Activated naive CD4-positive, alpha-beta T cell treated with anti-CD3 and anti-CD28 coated beads for 36 hours (primary cell): ENCODE measurements at regions of chr9 and their contacts with region 1.

Region 1: DNA sequence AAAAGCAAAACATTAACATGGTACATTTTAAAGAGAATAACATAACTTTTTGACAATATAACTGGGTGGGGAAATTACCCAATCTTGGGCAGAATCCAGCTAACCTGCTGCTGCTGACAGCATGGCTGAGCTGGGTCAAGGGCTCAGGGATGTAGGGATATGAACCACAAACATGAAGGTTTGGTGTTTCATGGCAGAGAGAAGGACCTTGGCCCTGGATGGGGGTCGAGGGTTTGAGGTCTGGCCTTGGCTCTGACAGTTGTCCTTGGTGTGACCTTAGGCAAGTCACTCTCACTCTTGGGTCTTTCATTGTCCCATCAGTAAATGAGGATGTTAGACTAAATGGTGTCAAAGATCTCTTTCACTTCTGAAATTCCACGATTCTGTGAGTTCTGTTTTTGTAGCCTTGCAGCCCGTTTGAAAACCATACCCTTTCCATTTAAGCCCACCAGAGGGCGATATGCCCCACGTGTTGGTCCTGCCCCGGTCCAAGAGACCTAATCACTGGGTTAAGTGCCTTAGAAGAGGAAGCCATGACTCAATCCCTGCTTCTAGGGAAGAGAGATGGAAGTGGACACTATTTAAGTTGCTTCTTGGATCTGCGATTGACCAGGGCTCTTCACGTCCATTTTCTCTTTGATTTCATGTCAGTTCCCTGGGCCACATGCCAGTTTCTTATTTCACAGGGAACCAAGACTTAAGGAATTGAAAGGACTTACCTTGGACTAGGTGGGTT is 56.8 kb upstream of the TEX48 start:
- DNase-seq: peak; percentile 82
- H3K4me3 Mint-ChIP-seq: no peak overlapping the region
- H3K27ac Mint-ChIP-seq: peak overlapping the region; percentile 86
- H3K4me1 Mint-ChIP-seq: peaks cover 56% of the 10 kb centered on the region
- H3K27me3 Mint-ChIP-seq: no peaks in the 10 kb centered on the region

Region 2: GRCh38 chr9:114718801-114719221 is 19.9 kb before region 1 on chr9:
- CTCF ChIA-PET with region 1: interaction called, 5 read pairs
- intact Hi-C with region 1: loop called (anchors 1 kb)
- DNase-seq: peak; percentile 97
- H3K4me3 Mint-ChIP-seq: peak overlapping the region; percentile 22
- H3K27ac Mint-ChIP-seq: peak overlapping the region; percentile 81
- H3K4me1 Mint-ChIP-seq: peaks cover 49% of the 10 kb centered on the region
- H3K27me3 Mint-ChIP-seq: peaks cover 5% of the 10 kb centered on the region

Region 3: GRCh38 chr9:114754581-114754980 is 15.8 kb after region 1 on chr9:
- CTCF ChIA-PET with region 1: no interaction called
- intact Hi-C with region 1: no loop called
- DNase-seq: no peak
- H3K4me3 Mint-ChIP-seq: no peak overlapping the region
- H3K27ac Mint-ChIP-seq: no peak overlapping the region
- H3K4me1 Mint-ChIP-seq: peaks cover 6% of the 10 kb centered on the region
- H3K27me3 Mint-ChIP-seq: no peaks in the 10 kb centered on the region

Region 4: DNA sequence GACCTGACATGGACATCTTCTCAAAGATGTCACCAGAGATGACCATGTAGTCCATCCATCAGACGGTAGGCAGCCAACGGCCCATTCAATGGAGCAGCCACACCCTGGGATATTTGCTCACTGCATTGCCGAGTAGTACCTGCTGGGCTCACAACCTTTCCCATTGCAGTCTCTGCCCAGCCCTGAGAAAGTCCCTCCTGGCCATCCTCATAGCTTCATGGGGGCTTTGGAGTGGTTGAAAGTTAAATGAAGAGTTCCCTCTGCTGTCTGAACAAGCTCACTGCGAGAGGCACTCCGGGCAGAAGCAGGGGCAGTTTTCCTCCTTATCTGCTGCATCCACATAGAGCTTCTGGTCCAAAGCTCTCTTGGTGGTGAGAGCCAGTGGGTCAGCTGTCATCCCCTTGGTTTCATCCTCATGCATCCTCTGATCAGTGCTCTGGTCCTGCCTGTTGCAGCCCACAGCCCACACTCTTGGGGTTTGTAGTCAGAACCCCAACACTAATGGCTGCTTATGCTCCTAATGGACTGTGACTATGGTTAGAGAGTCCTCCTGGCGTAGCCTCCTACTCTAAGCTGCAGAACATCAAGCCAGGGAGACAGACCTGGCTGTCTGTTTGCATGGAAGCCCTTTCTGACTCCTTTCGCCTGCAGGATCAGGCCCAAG is 168.3 kb after region 1 on chr9:
- CTCF ChIA-PET with region 1: interaction called, 155 read pairs
- intact Hi-C with region 1: loop called (anchors 1 kb)
- DNase-seq: peak; percentile 46
- H3K4me3 Mint-ChIP-seq: no peak overlapping the region
- H3K27ac Mint-ChIP-seq: peak overlapping the region; percentile 98
- H3K4me1 Mint-ChIP-seq: peaks cover 54% of the 10 kb centered on the region
- H3K27me3 Mint-ChIP-seq: no peaks in the 10 kb centered on the region